ENCODE measurements at regions of chr3 and their contacts with region 1.

Region 1: GRCh38 chr3:50272911-50273693 is 4.2 kb downstream of the SEMA3B start:
- DNase-seq: peak in 1 of 2 donors; percentile 91
- H3K4me3 ChIP-seq: peak overlapping the region; percentile 14 to 60
- H3K27ac ChIP-seq: peak overlapping the region in 1 of 2 donors; percentile 3
- H3K4me1 ChIP-seq: peaks cover 12 to 24% of the 10 kb centered on the region in 2 donors
- H3K27me3 ChIP-seq: no peaks in the 10 kb centered on the region
- CTCF ChIP-seq: peak; percentile 97 to 99 (median 99)

Region 2: DNA sequence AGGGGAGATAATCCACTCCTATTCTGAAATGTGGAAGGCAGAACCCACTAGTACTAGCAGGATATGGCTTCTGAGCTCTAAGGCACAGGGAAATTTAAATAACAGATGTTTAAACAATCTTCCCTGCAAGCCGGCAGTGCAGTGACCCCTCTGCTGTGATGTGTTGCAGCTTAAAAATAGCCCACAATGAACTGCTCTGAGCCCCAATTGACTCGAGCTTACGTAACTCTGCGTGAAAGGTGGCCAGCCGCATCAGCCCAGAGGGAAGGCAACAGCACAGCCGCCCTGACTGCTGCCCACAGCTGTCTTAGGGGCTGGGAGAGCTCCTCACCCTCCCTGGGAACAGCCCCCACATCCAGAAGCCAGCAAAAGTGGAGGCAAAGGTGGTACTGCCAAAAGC is 390.9 kb before region 1 on chr3:
- intact Hi-C with region 1: no loop called
- DNase-seq: no peak
- H3K4me3 ChIP-seq: no peak overlapping the region
- H3K27ac ChIP-seq: no peak overlapping the region
- H3K4me1 ChIP-seq: no peaks in the 10 kb centered on the region
- H3K27me3 ChIP-seq: no peaks in the 10 kb centered on the region
- CTCF ChIP-seq: no peak

Region 3: DNA sequence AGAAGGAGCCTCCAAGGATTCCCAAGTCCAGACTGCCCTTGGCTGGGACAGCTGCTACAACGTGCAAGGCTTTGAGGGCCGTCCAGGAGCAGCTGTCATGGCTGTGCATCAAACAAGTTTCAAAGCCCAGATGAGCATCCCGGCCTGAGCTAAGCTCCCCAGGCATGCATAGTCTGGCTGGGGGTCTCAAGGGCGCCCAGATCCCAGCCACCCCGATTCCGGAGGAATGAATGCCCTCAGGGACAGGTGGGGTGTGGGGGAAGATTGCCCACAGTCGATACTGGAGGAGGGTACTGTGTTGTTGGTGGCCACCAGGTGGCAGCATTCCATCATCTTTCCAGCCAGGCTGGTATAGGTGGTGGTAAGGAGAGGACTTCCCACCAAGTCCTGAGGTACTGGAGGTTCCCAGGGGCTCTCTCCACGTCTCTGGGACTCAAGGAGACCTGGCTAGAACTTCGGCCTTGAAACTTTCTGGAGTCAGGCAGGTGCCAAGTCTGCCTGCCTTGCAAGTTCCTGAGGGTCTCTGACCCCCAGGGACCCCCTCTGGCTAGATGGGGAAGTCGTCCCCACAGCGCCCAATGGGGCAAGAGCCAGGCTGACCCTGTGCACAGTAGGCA is 151.6 kb before region 1 on chr3:
- intact Hi-C with region 1: loop called (anchors 5 kb)
- DNase-seq: peak in 1 of 2 donors; percentile 82
- H3K4me3 ChIP-seq: no peak overlapping the region
- H3K27ac ChIP-seq: no peak overlapping the region
- H3K4me1 ChIP-seq: peaks cover 1 to 27% of the 10 kb centered on the region in 2 donors
- H3K27me3 ChIP-seq: no peaks in the 10 kb centered on the region
- CTCF ChIP-seq: peak; percentile 75 to 88 (median 79)

Region 4: GRCh38 chr3:50192689-50193141 is 80.4 kb before region 1 on chr3:
- intact Hi-C with region 1: loop called (anchors 1 kb)
- DNase-seq: peak in 1 of 2 donors; percentile 86
- H3K4me3 ChIP-seq: peak overlapping the region in 1 of 2 donors; percentile 39
- H3K27ac ChIP-seq: no peak overlapping the region
- H3K4me1 ChIP-seq: peaks cover 10 to 15% of the 10 kb centered on the region in 2 donors
- H3K27me3 ChIP-seq: peaks cover 18% of the 10 kb centered on the region
- CTCF ChIP-seq: peak; percentile 82 to 92 (median 91)

Region 5: DNA sequence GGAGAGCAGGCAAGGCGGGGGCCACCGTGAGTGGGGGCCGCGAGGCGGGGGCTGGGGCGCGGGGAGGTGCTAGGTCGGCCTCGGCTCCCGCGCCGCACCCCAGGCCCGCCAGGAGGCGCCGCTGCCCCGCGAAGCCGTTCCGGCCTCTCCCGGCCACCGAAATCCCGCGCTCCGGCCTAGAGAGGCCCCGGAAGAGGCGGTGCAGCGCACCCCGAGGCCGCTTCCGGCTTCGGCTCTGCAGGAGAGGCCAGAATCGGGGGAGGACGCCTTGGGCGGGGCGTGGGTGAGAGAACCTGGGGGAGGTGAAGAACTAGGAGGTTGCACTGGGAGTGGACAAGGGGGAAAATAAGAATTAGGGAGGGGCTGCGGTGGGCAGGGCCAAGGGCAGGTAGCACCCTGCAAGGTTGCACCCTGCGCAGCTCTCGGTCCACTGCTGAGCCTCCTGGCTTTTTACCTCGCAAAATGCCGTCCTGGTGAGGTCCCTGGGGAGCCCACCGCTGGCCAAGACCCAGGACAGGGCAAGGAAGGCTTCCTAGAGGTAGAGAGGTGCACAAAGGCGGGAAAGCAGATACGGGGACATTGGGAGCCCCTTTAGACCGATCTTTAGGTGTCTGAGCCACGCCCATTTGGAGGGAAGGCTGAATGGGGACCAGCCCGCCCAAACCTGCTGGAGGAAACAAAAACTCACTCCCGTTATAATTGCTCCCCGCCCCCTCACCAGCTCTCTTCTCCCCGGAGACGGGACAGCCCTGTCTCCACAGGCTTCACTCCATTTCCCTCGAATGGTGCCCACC is 45.5 kb before region 1 on chr3:
- intact Hi-C with region 1: loop called (anchors 1 kb)
- DNase-seq: peak; percentile 51 to 95
- H3K4me3 ChIP-seq: peak overlapping the region; percentile 63 to 78
- H3K27ac ChIP-seq: peak overlapping the region; percentile 69 to 75
- H3K4me1 ChIP-seq: peaks cover 0 to 16% of the 10 kb centered on the region in 2 donors
- H3K27me3 ChIP-seq: no peaks in the 10 kb centered on the region
- CTCF ChIP-seq: peak; percentile 68 to 96 (median 84)

Region 6: DNA sequence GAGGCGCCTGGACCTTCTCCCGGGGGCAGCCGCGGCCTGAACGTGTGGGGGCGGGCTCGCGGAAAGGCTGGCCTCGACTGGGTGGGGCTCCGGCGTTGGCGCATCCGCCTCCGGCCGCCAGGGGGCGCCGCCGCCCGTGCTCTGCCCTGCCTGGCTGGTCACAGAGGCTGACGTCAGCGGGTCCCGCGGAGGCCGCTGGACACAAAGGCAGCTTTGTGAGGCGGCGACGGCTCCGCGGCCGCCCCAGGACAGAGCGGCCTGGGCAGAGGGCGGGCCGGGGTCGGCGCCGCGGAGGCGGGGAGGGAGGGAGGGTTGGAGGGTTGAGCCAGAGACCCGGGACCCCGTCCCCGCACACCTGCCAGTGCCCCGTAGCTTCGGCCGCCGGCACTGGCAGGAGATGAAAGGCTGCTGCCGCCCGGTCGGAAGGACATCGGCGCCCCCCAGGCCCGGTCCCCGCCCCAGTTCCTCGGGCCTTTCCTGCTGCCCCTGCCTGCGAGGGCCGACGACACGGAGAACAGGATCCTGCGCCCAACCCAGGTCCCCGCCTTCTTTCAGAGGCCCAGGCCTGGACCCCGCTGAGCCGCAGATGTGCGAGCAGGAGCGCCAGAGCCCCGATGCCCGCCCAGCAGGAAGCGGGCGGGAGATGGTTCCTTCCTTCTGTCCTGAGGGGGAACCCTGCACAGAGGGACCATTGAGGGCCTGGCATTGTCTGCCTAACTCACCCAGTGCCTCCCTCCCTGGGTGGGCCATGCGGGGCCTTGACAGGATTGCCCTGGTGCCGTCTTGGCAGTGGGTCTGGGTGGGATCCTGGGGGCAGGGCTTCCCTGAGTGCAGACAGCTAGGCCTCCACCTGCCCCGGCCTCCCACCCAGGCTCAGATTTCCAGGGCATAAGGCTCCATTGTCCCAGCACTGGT is 12.8 kb before region 1 on chr3:
- intact Hi-C with region 1: loop called (anchors 1 kb)
- DNase-seq: peak; percentile 72 to 96
- H3K4me3 ChIP-seq: peak overlapping the region; percentile 55 to 70
- H3K27ac ChIP-seq: peak overlapping the region; percentile 97 to 99
- H3K4me1 ChIP-seq: peaks cover 19 to 36% of the 10 kb centered on the region in 2 donors
- H3K27me3 ChIP-seq: no peaks in the 10 kb centered on the region
- CTCF ChIP-seq: peak; percentile 96 to 100 (median 99)